Panc1 (cell line): ENCODE measurements at regions of chr18 and their contacts with region 1.

Region 1: DNA sequence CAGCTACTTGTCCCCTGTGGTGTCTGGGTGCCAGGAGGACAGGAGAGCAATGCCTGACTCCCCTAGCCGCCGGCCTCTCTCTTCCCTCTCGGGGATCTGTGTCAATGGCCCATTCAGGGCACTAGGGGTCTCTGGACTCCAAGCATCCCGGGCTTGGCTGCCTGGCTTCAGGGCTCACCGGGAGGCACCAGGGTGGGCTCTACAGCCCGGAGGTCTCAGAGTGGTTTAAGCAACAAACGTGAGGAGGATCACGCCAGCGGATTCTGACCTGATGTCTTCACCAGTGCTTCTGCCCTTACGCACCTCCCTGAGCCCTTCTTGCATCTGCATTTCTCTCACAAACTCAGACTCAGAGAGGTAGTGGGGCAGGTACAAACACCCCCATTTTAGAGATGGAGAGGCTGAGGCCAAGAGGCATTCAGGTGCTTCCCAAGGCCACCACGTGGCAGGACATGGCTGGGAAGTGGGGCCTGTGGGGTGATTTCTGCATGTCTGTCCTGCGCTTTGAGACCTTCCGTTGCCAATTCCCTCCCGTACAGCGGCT is 243.0 kb downstream of the CELF4 start:
- DNase-seq: no peak
- ATAC-seq: peak; percentile 85
- H3K4me3 ChIP-seq: no peak overlapping the region
- H3K27ac ChIP-seq: no peak overlapping the region
- H3K4me1 ChIP-seq: no peaks in the 10 kb centered on the region
- H3K27me3 ChIP-seq: no peaks in the 10 kb centered on the region; the same call in 1 of the 2 replicates
- CTCF ChIP-seq: peak; percentile 89

Region 2: GRCh38 chr18:37042381-37042780 is 280.2 kb before region 1 on chr18:
- CTCF ChIA-PET with region 1: no interaction called
- POLR2A ChIA-PET with region 1: no interaction called
- in situ Hi-C with region 1: no loop called
- intact Hi-C with region 1: no loop called
- DNase-seq: no peak
- ATAC-seq: no peak
- H3K4me3 ChIP-seq: no peak overlapping the region
- H3K27ac ChIP-seq: no peak overlapping the region
- H3K4me1 ChIP-seq: no peaks in the 10 kb centered on the region
- H3K27me3 ChIP-seq: no peaks in the 10 kb centered on the region
- CTCF ChIP-seq: no peak

Region 3: DNA sequence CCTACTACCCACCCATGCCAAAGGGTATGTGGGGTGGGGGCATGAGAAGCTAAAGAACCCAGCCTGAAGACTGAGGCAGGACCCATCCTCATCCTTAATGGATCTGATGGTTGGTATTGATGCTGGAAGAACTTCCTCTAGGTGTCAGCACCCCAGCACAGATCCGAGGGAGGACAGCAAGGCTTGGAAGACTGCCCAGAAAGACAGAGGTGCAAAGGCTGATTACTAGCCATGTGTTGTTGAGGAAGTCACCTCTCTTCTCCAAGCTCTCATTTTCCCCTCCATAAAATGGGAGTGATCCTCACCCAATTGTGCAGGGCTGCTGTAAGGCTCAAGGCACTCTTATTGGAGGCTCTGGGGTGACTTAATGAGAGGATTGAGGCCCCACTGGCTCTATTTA is 13.5 kb before region 1 on chr18:
- CTCF ChIA-PET with region 1: interaction called, 10 read pairs
- POLR2A ChIA-PET with region 1: no interaction called
- in situ Hi-C with region 1: no loop called
- intact Hi-C with region 1: no loop called
- DNase-seq: no peak
- ATAC-seq: no peak
- H3K4me3 ChIP-seq: no peak overlapping the region
- H3K27ac ChIP-seq: no peak overlapping the region
- H3K4me1 ChIP-seq: no peaks in the 10 kb centered on the region
- H3K27me3 ChIP-seq: no peaks in the 10 kb centered on the region
- CTCF ChIP-seq: no peak

Region 4: GRCh38 chr18:37588289-37588688 is 265.7 kb after region 1 on chr18:
- CTCF ChIA-PET with region 1: no interaction called
- POLR2A ChIA-PET with region 1: no interaction called
- in situ Hi-C with region 1: no loop called
- intact Hi-C with region 1: no loop called
- DNase-seq: no peak
- ATAC-seq: no peak
- H3K4me3 ChIP-seq: no peak overlapping the region
- H3K27ac ChIP-seq: no peak overlapping the region
- H3K4me1 ChIP-seq: no peaks in the 10 kb centered on the region
- H3K27me3 ChIP-seq: no peaks in the 10 kb centered on the region
- CTCF ChIP-seq: no peak